Calu3 (cell line): ENCODE measurements at regions of chr11 and their contacts with region 1.

Region 1: DNA sequence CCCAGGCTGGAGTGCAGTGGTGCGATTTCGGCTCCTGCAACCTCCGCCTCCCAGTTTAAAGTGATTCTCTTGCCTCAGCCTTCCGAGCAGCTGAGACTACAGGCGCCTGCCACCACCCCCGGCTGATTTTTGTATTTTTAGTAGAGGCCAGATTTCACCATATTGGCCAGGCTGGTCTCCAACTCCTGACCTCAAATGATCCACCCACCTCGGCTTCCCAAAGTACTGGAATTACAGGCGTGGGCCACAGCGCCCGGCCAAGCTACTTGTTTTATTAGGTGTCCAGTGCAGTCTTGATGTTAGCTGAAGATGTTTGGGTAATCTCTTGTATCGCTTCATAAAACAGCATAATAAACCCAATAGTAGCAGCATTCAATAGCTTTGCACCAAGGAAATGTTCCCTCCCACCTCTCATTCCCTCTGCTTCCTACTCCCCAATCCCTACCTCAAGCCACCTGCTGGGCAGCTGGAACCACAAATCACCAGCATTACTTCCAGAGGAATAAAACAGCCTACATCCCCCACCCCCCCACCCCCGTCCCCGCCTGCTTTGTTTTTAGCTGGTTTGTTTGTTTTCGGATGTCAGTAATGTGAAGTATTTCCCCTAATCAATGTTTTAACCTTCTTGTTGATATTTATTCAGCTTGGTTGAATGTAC is 11.0 kb upstream of the GRIK4 start:
- DNase-seq: no peak
- H3K4me3 Mint-ChIP-seq: no peak overlapping the region
- H3K27ac Mint-ChIP-seq: no peak overlapping the region
- H3K4me1 Mint-ChIP-seq: peaks cover 8% of the 10 kb centered on the region
- H3K27me3 Mint-ChIP-seq: peaks cover 11% of the 10 kb centered on the region
- CTCF ChIP-seq: no peak

Region 2: DNA sequence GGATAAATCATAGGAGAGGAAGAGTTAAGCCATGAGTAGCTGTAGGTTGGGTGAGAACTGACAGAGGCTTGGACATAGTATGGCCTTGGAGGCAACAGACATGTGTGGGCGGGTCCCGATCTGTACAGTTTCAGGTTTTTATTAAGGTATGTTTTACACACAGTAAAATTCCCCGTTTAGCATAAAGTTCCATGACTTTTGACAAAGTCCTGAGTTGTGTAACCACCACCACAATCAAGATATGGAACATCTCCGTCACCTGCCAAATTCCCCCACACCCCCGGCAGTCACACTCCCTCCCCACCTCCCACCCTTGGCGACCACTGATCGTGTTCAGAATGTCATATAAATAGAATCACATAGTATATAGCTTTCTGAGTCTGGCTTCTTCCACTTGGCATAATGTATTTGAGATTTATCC is 79.1 kb after region 1 on chr11:
- CTCF ChIA-PET with region 1: no interaction called
- intact Hi-C with region 1: no loop called
- DNase-seq: no peak
- H3K4me3 Mint-ChIP-seq: no peak overlapping the region
- H3K27ac Mint-ChIP-seq: no peak overlapping the region
- H3K4me1 Mint-ChIP-seq: no peaks in the 10 kb centered on the region
- H3K27me3 Mint-ChIP-seq: peaks cover 85% of the 10 kb centered on the region
- CTCF ChIP-seq: no peak

Region 3: GRCh38 chr11:120952461-120953434 is 452.2 kb after region 1 on chr11:
- CTCF ChIA-PET with region 1: no interaction called
- intact Hi-C with region 1: loop called (anchors 10 kb)
- DNase-seq: peak; percentile 61
- H3K4me3 Mint-ChIP-seq: no peak overlapping the region
- H3K27ac Mint-ChIP-seq: no peak overlapping the region
- H3K4me1 Mint-ChIP-seq: no peaks in the 10 kb centered on the region
- H3K27me3 Mint-ChIP-seq: peaks cover 57% of the 10 kb centered on the region
- CTCF ChIP-seq: peak; percentile 19